Posterior vena cava (tissue), 2 donors: ENCODE measurements at regions of chr12 and their contacts with region 1.

Region 1: DNA sequence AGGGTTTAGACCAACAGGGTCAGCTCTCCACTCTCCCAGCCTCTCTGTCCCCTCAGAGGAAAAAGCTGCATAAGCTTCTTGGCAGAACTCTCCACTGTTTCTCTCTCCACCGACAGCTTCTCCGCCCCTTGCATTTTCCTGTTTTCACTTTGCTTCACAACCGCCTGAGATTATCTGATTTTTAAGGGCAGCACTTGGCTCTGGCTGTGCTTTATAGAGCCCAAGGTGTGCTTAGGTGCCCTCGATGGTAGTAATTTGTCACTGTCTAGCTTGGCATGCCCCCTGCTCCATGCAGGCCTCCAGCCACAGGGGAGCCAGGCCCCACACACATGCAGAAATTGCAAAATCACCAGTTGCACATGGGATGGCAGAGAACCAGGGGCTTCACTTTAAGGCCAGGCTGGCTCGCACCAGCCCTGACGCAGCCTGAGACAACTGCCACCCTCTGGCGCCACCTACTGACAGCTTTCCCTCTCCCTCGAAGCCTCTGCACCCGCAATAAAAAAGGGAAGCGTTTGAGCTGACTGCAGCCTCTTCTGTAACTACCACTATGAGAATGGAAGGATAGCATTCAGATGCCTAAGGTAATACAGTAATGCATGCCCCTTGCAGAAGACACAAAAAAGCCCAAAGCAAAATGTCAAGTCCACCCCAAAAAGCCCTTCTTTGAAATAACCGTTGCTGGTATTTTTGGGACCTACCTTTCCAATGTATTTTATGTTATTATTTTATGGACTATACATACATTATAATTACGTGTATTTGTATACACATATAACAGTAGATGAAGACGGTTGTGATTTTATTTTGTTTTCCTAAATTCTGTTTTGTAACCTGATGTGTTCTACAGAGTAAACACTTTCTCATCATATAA is 32.0 kb upstream of the RIMBP2 start:
- DNase-seq: peak; percentile 95

Region 2: GRCh38 chr12:129938089-129938488 is 810.0 kb before region 1 on chr12:
- intact Hi-C with region 1: loop called in 1 of 2 experiments (anchors 10 kb)
- DNase-seq: no peak

Region 3: DNA sequence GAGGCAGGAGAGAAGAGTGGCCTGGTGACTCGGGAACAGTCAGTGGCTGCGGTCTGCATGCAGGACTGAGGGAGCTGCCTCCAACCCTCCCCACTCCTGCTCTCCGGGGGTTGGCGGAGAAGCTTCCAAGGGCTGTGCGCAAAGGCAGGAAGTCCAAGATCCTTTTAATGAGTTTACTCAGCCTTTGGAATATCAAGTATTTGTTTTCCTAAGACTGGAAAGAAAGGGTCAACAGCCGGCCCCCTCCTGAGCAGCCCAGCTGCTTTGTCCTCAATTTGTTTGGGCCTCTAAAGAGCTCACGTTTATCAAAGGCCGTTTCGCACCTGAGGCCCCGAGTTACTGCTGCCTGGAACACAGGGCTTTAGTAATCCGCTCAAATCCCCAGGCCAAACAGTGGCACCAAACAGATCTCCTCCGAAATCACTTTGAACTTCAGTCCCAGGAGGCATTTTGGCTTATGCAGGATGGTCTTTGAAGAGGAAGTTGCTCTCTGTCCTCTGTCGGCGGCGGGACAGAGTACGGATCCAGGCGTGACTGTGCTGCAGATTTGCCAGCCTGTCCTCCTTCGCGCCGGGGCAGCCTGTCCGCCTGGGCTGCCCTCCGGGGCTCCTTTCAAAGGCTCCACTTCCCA is 703.0 kb before region 1 on chr12:
- intact Hi-C with region 1: loop called in 1 of 2 experiments (anchors 5 kb)
- DNase-seq: no peak

Region 4: DNA sequence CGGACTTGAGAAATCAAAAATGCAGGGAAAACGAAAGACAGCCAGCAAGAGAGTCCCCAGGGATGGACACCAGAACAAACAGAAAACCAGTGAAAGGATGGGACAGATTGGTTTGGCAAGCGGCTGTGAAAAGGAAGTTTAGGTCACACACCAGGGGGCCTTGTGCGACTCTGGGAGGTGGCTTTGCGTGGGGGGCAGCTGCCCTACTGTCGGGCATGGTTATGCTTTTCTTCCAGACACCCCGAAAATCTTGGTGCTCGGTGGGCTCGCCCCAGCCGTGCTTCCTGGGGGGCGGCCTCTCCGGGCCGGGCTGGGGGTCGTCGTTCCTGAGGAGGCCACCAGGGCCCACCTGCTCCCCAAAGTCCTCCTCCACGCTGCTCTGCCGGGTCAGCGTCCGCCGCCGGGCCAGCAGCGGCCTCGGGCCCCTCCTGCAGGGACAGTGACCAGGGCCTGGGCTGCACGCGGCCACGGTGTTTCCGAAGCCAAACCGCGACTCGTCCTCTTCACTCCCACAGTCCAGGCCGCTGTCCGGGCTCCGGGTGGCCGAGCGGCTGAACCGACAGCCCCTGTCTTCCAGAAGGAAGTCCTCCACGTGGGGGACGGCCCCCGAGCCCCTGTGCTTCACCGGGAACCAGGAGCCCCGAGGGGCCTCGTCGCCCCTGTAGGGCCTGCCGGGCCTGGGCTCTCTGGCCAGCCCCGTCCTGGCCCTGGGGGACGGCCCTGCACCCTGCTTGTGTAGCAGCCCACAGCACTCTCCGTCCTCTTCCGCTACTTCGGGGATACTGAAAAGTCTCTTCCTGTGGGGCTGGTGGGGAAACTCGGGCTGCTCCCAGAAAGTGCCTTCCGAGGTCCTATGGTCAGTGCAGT is 323.9 kb before region 1 on chr12:
- intact Hi-C with region 1: no loop called
- DNase-seq: no peak

Region 5: DNA sequence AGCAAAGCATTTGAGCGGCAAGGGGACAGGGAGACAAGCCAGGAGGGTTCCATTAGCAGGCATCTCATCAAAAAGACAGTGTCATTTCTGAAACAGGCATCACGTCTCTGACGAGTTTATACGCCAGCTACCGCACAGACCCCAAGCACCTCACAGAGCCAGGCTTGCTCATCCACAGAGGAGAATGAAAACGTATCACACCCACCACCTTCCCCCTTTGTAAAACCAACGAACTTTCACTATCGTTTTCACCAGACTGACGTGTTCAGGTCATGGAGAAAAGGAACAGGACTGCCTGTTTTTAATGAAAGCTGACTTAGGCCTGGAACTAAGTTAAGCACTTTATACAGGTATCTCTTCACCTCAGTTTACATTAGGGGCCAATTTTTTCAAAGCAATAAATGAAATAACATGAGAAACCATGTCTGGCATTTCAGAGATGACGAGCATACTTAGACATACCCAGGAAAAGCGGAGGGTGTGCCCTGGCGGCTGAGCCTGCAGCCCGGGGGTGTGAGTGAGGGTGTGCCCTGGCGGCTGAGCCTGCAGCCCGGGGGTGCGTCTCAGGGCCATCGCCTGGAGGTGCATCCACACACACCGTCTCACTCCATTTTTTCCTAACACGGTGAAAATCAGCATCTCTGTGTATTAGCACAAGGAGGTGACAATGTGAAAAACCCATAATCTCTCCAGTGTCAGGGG is 49.0 kb after region 1 on chr12:
- intact Hi-C with region 1: no loop called
- DNase-seq: no peak

Region 6: GRCh38 chr12:130872179-130873096 is 124.3 kb after region 1 on chr12:
- intact Hi-C with region 1: no loop called
- DNase-seq: peak; percentile 85

Region 7: DNA sequence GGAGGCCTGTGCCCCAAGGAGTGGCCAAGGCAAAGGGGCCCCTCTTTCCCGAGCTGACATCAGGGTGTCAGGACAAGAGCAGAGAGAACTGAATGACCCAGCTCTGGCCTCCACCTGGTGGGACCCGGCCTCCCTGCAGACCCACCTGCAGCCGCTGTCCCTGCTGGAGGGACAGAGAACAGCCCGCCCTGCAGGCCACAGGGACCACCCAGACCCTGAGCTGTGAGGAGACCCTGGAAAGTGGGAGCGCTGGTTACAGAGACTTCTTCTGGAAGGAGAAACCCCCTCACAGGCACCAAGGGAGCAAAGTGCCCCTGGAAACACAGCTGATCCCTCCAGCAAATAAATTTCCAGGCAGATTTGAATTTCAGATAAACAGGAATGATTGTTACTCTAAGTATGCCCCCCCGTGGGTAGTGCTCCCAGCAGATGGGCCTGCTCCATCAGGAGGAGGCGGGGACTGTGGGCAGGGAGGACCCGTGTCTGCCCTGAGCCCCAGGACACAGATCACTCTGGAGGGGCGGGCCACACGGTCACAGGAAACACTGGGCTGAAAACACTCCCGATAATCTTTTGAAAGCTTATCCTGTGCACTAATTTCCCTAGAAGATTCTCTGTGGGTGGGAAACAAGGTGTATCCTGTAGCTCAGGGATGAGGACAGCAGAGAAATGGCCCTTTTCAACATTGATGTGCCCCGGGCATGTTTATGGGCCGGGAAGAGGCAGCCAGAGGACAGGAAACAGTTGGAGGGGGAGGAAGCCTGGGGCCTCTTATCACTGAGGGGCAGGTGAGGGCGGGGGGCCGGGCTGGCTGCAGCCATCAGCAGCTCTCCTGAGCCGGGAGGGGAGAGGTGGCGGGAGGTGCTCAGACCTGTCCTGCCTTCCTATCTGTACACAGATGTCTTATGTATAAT is 481.6 kb after region 1 on chr12:
- intact Hi-C with region 1: no loop called
- DNase-seq: peak; percentile 85

Region 8: GRCh38 chr12:131441060-131441396 is 692.9 kb after region 1 on chr12:
- intact Hi-C with region 1: loop called in 1 of 2 experiments (anchors 5 kb)
- DNase-seq: no peak